ENCODE measurements at regions of chr9 and their contacts with region 1.

Region 1: DNA sequence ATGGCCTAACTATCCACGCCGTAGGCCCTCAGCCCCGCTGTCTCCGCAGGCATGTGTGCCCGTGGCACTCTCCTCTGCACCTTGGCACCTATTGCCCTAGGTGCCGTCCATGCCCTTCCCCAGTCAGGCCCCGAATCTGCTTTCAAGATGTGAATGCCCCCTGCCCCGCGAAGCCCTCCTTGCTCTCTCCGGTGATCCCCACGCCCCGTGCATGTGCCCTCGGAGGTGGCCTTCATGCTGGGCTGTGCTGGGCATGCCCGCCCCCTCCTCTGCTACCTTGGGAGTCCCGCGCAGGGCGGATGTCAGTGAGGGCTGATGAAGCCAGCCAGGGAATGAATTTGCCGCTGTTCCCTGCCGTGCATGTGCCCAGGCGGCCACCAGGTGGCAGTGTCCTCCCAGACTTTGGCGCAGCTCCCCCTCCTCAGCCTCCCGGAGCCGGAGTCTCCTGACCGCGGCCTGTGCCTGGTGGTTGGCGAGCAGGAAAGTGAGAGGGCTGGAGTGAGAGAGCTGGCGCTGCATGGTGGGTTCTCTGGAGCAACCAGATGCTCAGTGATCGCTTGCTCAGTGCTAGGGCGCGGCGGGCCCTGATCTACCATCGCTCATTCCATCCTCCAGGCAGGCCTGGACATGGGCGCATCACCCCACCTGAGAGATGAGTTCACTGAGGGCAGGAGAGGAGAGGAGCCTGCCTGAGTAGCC is 112.9 kb upstream of the LMX1B start:
- DNase-seq: peak; percentile 74 to 79
- ATAC-seq: peak; percentile 65 to 88 (median 80)
- H3K4me3 ChIP-seq: no peak overlapping the region
- H3K27ac ChIP-seq: no peak overlapping the region
- H3K4me1 ChIP-seq: peaks cover 0 to 29% (median 22%) of the 10 kb centered on the region in 9 donors
- H3K27me3 ChIP-seq: peaks cover 0 to 14% (median 0%) of the 10 kb centered on the region in 7 donors
- CTCF ChIP-seq: peak; percentile 96 to 99 (median 97)

Region 2: DNA sequence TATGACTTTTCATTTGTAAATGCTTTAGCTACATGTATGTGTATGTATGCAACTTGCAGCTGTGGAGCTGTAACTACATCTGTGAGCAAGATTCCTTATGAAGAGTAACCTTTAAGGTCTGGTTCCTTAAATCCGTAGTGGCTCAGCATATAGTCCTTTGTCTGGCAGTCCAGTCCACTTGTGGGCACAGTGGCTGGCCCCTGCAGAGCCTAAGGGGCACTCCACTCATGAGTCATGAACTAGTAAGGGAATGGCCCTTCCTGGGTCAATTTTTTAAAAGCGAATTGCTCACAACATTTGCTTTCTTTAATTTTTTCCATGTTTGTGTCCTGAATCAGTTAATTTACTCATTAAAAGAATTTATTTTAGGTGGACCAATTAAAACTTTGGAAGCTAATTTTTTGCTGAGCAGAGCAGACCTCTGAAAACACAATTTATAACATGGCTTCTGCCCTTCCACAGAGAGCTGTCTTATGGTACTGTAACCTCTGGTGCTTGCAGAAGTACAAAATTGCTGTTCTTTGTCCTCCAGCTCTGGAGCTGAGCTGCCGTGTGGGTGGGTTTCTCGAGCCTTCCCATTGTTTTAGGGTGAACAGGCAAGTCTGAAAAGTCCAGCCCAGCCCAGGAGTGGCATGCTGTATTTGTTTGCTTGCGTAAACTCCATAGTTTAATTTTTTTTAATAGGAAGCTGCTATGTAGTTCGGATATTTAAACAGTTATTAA is 64.1 kb before region 1 on chr9:
- intact Hi-C with region 1: no loop called
- DNase-seq: no peak
- ATAC-seq: no peak
- H3K4me3 ChIP-seq: no peak overlapping the region
- H3K27ac ChIP-seq: no peak overlapping the region
- H3K4me1 ChIP-seq: no peaks in the 10 kb centered on the region
- H3K27me3 ChIP-seq: no peaks in the 10 kb centered on the region
- CTCF ChIP-seq: no peak

Region 3: GRCh38 chr9:126558051-126558665 is 57.3 kb after region 1 on chr9:
- intact Hi-C with region 1: loop called (anchors 1 to 5 kb)
- DNase-seq: peak; percentile 48 to 50
- ATAC-seq: peak; percentile 63 to 83 (median 72)
- H3K4me3 ChIP-seq: no peak overlapping the region
- H3K27ac ChIP-seq: no peak overlapping the region
- H3K4me1 ChIP-seq: peaks cover 0 to 5% (median 0%) of the 10 kb centered on the region in 9 donors
- H3K27me3 ChIP-seq: peaks cover 0 to 28% (median 10%) of the 10 kb centered on the region in 7 donors
- CTCF ChIP-seq: peak; percentile 82 to 91 (median 86)

Region 4: DNA sequence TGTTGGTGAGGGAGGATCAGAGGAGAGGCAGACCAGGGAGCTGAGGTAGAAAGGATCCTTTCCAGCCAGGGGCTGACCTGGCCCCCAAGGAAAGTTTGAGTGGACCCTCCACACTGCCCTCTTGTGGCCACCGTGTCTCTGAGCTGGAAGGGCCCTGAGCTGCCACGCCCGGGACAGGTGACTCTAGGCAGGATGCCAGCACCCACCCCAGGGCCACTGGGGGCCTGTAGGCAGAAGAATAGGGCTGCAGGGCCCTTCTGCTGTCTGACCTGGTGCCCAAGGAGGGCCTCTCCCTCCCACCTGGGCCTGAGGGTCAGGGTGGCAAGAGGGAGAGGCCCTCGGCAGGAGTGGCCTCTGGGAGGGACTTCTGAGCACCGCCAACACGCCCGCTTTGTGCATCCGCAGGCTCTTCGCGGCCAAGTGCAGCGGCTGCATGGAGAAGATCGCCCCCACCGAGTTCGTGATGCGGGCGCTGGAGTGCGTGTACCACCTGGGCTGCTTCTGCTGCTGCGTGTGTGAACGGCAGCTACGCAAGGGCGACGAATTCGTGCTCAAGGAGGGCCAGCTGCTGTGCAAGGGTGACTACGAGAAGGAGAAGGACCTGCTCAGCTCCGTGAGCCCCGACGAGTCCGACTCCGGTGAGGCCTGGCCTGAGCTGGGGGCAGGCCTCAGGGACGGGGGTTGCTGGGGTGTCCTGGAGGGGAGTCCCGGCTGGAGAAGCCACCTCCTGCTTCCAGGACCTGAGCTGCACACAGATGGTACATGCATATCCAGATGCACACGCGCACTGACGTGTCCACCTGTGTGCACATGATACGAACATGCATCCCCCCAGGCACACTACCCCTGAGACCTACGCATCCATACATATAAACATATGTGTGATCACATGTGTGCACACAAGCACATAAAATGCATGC is 189.9 kb after region 1 on chr9:
- intact Hi-C with region 1: loop called in 2 of 10 experiments (anchors 5 to 10 kb)
- DNase-seq: peak; percentile 25 to 55
- ATAC-seq: peak; percentile 32 to 65 (median 45)
- H3K4me3 ChIP-seq: no peak overlapping the region
- H3K27ac ChIP-seq: no peak overlapping the region
- H3K4me1 ChIP-seq: no peaks in the 10 kb centered on the region
- H3K27me3 ChIP-seq: peaks cover 0 to 55% (median 48%) of the 10 kb centered on the region in 7 donors
- CTCF ChIP-seq: peak; percentile 50 to 78 (median 66)

Region 5: DNA sequence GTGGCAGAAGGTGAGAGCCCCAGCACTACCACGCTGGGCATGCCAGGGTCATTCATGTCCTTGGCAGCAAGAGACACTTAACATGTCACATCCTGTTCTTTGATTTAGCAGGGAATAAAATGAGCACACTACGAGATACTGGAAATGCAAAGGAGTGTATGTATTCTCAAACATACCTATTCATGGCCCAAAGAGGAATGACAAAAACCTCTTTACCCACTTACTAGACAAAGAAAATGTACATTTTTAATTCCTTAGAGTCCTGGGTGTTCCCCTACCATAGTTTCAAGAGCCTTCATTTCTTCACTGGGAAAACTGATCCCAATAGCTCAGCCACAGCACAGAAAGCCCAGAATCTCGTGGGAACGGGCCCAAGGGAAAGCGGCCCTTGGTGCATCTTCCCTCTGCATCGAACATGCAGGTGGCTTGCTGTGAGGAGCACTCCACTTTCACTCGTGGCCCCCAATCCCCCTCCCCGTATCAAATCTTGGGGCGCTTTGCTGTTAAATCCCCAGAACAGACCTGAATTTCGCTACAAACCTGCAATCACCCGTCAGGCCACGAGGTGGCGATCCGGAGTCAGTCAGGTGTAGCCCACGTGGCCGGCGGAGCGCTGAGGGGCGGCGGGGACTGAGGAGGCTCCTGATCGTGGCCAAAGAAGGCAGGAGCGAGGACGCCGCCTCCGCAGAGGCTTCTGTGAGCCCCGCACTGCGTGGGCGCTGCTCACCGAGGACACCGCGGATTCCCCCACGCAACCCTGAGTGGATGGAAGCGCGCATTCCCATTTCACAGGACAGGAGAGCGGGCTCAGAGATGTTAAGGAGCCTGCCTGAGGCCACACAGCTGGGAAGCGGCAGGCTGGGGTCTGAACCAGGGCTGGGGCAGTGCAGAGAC is 204.3 kb after region 1 on chr9:
- intact Hi-C with region 1: loop called in 1 of 10 experiments (anchors 10 kb)
- DNase-seq: peak; percentile 68 to 78
- ATAC-seq: peak; percentile 57 to 88 (median 73)
- H3K4me3 ChIP-seq: peak overlapping the region in 7 of 10 donors; percentile 5 to 25 (median 15)
- H3K27ac ChIP-seq: no peak overlapping the region
- H3K4me1 ChIP-seq: peaks cover 6 to 16% (median 14%) of the 10 kb centered on the region in 9 donors
- H3K27me3 ChIP-seq: peaks cover 11 to 71% (median 58%) of the 10 kb centered on the region in 7 donors
- CTCF ChIP-seq: peak; percentile 75 to 90 (median 86)